ENCODE measurements at regions of chr13 and their contacts with region 1.

Region 1: GRCh38 chr13:75492389-75492788 is 10.4 kb upstream of the TBC1D4 start:
- DNase-seq: peak in 2 of 3 donors; percentile 24 to 28
- H3K4me3 ChIP-seq: no peak overlapping the region
- H3K27ac ChIP-seq: no peak overlapping the region
- H3K4me1 ChIP-seq: peaks cover 0 to 16% (median 2%) of the 10 kb centered on the region in 4 experiments
- H3K27me3 ChIP-seq: no peaks in the 10 kb centered on the region

Region 2: DNA sequence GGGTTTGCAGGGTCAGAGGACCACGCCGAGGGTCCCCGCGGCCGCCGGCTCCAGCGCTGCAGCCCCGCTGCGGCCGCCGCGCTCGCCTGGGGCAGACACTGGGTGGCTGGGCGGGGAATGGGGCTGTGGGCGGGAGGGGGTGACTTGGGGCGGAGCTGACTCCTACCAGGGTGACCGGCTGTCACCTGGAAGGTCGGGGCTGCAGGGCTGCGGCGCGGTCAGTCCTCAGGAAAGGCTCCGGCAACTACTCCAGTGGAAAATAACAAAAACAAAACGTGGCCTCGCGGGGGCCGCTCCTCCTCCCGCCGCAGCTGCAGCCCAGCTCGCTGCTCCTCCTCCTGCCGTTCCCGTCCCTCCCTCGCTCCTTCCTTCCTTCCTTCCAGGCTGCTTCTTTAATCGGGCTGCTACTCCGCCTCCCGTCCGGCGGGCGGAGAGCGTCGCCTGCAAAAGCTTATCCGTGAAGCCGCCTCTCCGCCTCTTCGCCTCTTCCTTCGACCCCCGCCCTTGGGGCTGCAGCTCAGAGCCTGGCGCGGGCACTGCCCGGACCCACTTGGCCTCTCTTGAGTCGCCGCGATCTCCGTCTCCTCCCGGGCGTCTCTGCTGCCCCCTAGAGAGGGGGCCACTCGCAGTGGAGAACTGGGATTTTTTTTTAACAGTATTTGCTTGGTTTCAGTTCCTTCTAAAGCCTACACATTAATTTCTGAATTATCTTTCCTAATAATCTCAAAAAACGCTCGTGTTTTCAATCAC is 10.1 kb before region 1 on chr13 and contains the start of gene TBC1D4:
- CTCF ChIA-PET with region 1: interaction called, 12 read pairs
- POLR2A ChIA-PET with region 1: no interaction called
- DNase-seq: peak; percentile 84 to 92 (median 87)
- H3K4me3 ChIP-seq: peak within 1 kb of the TSS; percentile 68 to 94 (median 85)
- H3K27ac ChIP-seq: no peak within 1 kb of the TSS
- H3K4me1 ChIP-seq: peaks cover 4 to 48% (median 32%) of the 10 kb centered on the region in 4 experiments
- H3K27me3 ChIP-seq: peaks cover 0 to 4% (median 0%) of the 10 kb centered on the region in 5 experiments

Measured in common myeloid progenitor, CD34-positive (primary cell).